ENCODE measurements at regions of chr17 and their contacts with region 1.

Region 1: DNA sequence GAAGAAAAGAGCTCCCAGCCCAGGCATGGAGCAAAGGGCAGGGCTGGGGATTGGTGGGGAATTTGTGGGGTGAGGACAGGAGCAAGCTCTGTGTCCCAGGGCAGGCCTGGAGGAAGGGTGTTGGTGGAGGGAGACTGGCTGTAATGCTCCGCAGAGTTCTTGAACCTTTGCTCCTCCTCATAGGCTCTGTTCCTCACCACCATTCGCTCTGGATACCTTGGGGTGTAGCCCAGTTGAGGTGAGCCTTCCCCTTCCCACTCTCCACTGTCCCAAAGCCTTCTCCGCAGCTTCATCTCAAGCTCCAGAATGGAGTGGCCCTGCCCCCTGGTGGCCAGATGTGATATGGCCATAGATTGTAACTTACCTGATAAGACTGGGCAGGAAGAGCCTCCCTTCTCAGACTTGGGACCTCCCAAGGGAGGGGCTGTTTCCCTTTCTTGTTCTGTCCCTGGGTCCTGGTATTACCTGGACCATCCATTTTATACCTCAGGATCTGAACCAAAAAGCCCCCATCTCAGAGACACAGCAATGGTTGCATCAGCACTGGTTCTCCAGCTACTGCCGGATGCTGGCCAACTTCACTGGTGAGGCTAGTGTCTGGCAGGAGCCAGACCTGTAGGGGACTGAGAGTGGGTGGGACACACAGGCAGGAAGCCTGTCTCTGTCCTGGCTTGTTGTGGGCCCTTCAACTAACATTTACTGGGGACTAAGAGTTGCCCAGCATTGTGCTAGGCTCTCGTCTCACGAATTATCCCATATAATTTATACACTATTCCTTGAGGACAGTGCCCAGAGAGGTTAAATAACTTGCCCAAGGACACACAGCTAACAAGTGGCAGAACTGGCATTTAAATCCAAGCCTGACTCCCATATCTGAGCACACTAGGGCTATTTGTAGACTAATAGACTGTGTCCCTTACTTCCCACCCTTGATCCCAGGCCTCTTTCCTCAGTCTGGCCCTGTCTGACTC is 19.1 kb upstream of the STAC2 start:
- DNase-seq: peak; percentile 40
- ATAC-seq: peak; percentile 96
- H3K4me3 ChIP-seq: no peak overlapping the region
- H3K27ac ChIP-seq: no peak overlapping the region
- H3K4me1 ChIP-seq: peaks cover 9% of the 10 kb centered on the region
- H3K27me3 ChIP-seq: no peaks in the 10 kb centered on the region; a peak in 2 of 4 replicates
- CTCF ChIP-seq: peak; percentile 90 to 97 (median 94); a peak in 5 of 6 replicates
- EP300 ChIP-seq: no peak
- POLR2A ChIP-seq: no peak
- RAD21 ChIP-seq: peak; percentile 90

Region 2: GRCh38 chr17:39174907-39175694 is 69.8 kb before region 1 on chr17:
- CTCF ChIA-PET with region 1: interaction called, 20 read pairs
- POLR2A ChIA-PET with region 1: no interaction called
- RAD21 ChIA-PET with region 1: interaction called, 5 read pairs
- SMC1A ChIA-PET with region 1: interaction called, 4 read pairs
- in situ Hi-C with region 1: no loop called
- intact Hi-C with region 1: no loop called
- DNase-seq: no peak
- ATAC-seq: peak; percentile 93
- H3K4me3 ChIP-seq: no peak overlapping the region
- H3K27ac ChIP-seq: no peak overlapping the region
- H3K4me1 ChIP-seq: no peaks in the 10 kb centered on the region
- H3K27me3 ChIP-seq: no peaks in the 10 kb centered on the region
- CTCF ChIP-seq: peak; percentile 69 to 83 (median 81)
- EP300 ChIP-seq: no peak
- POLR2A ChIP-seq: no peak
- RAD21 ChIP-seq: peak; percentile 49

Region 3: GRCh38 chr17:39199820-39200069 is 45.1 kb before region 1 on chr17:
- CTCF ChIA-PET with region 1: interaction called, 658 read pairs
- POLR2A ChIA-PET with region 1: interaction called, 8 read pairs
- RAD21 ChIA-PET with region 1: interaction called, 160 read pairs
- SMC1A ChIA-PET with region 1: interaction called, 8 read pairs
- in situ Hi-C with region 1: no loop called
- intact Hi-C with region 1: no loop called
- DNase-seq: peak; percentile 81
- ATAC-seq: peak; percentile 65
- H3K4me3 ChIP-seq: peak overlapping the region; percentile 95
- H3K27ac ChIP-seq: peak overlapping the region; percentile 100
- H3K4me1 ChIP-seq: peaks cover 27% of the 10 kb centered on the region
- H3K27me3 ChIP-seq: no peaks in the 10 kb centered on the region
- CTCF ChIP-seq: no peak
- EP300 ChIP-seq: no peak
- POLR2A ChIP-seq: no peak
- RAD21 ChIP-seq: no peak

Region 4: DNA sequence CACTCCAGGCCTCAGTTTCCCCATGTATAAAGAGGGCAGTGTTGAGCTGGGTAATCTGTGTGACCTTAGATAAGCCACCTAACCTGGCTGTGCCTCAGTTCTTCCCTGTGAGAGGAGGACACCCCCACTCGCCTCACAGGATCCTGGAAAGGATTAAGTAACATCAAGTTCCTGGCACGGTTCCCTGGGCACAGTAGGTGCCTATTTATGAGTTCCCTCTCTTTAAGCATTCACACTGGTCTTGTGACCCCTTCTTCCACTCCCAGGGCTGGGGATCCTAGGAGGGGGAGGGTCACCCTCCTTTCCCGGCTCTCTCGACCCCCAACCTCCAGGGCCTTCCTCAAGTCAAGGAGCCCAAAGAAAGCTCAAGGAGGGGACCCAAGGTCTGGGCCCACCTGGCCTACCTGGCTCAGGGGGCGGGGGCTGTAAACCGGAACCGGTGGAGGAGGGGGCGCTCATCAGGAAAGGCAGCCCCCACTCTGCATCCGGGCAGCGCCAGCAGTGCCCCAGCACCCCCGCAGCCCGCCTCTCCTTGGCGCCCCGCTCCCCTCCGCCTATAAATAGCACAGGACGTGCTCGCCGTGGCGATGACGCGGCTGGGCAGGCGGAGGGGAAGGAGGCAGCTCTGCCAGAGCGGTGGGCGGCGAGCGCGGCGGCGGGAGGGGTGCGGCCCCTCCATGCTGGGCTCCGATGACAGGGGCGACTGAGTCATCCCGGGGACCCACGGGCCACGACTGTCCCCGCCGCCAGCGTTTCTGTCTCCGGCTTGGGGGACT is 35.4 kb before region 1 on chr17:
- CTCF ChIA-PET with region 1: interaction called, 658 read pairs
- POLR2A ChIA-PET with region 1: interaction called, 10 read pairs
- RAD21 ChIA-PET with region 1: interaction called, 160 read pairs
- SMC1A ChIA-PET with region 1: interaction called, 76 read pairs
- in situ Hi-C with region 1: loop called (anchors 5 kb)
- intact Hi-C with region 1: loop called (anchors 1 kb)
- DNase-seq: no peak
- ATAC-seq: peak; percentile 12
- H3K4me3 ChIP-seq: peak overlapping the region; percentile 34; the same call in 1 of the 2 replicates
- H3K27ac ChIP-seq: no peak overlapping the region; the same call in 1 of the 2 replicates
- H3K4me1 ChIP-seq: peaks cover 27% of the 10 kb centered on the region
- H3K27me3 ChIP-seq: peaks cover 2 to 3% of the 10 kb centered on the region in 2 experiments; a peak in 1 of 4 replicates
- CTCF ChIP-seq: no peak
- EP300 ChIP-seq: no peak
- POLR2A ChIP-seq: peak; percentile 41; the same call in 1 of the 2 replicates
- RAD21 ChIP-seq: no peak

Region 5: DNA sequence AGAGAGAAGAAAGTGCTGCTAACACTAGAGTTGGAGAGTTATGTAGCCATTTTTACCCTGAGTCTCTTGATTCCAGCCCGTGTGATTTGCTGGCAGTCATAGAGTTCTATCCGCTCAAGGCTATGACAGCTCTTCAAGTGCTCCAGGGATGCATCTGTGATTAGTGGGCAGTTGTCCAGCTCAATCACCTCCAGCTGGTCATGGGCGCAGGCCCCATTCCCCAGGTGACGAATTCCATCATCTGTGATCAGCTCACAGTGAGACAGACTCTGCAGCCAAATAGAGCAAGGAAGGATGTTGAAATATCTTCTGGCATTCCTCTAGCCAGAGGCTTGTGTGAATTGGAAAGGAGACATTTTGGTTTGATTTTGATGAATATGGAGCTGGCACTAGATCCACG is 19.2 kb after region 1 on chr17:
- CTCF ChIA-PET with region 1: interaction called, 17 read pairs
- POLR2A ChIA-PET with region 1: no interaction called
- RAD21 ChIA-PET with region 1: interaction called, 4 read pairs
- SMC1A ChIA-PET with region 1: interaction called, 3 read pairs
- in situ Hi-C with region 1: no loop called
- intact Hi-C with region 1: no loop called
- DNase-seq: no peak
- ATAC-seq: no peak
- H3K4me3 ChIP-seq: no peak overlapping the region
- H3K27ac ChIP-seq: no peak overlapping the region
- H3K4me1 ChIP-seq: no peaks in the 10 kb centered on the region
- H3K27me3 ChIP-seq: no peaks in the 10 kb centered on the region
- CTCF ChIP-seq: no peak
- EP300 ChIP-seq: no peak
- POLR2A ChIP-seq: no peak
- RAD21 ChIP-seq: no peak

Region 6: DNA sequence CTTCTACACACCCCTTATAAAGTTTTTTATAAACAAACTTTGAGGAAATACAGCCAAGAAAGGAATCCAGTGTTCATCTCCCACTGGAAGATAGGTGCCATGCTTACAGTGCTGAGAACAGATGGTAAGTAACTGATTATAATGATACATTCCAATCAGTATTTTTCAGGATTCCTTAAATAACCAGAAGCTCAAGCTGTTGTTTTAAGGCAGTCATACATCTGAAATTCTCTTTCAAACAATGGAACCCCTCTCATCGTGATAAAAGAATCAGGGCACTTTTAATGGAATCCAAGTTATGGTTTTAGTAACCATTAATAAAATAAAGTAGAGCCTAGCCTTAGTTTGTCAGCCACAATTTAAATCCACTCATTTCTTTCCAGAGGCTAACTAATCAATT is 36.9 kb after region 1 on chr17:
- CTCF ChIA-PET with region 1: interaction called, 14 read pairs
- POLR2A ChIA-PET with region 1: no interaction called
- RAD21 ChIA-PET with region 1: no interaction called
- SMC1A ChIA-PET with region 1: interaction called, 4 read pairs
- in situ Hi-C with region 1: no loop called
- intact Hi-C with region 1: no loop called
- DNase-seq: no peak
- ATAC-seq: no peak
- H3K4me3 ChIP-seq: no peak overlapping the region
- H3K27ac ChIP-seq: no peak overlapping the region
- H3K4me1 ChIP-seq: no peaks in the 10 kb centered on the region
- H3K27me3 ChIP-seq: no peaks in the 10 kb centered on the region
- CTCF ChIP-seq: no peak
- EP300 ChIP-seq: no peak
- POLR2A ChIP-seq: no peak
- RAD21 ChIP-seq: no peak

Region 7: GRCh38 chr17:40577611-40578065 is 1332.8 kb after region 1 on chr17:
- CTCF ChIA-PET with region 1: no interaction called
- POLR2A ChIA-PET with region 1: no interaction called
- RAD21 ChIA-PET with region 1: no interaction called
- SMC1A ChIA-PET with region 1: no interaction called
- in situ Hi-C with region 1: no loop called
- intact Hi-C with region 1: no loop called
- DNase-seq: peak; percentile 85
- ATAC-seq: peak; percentile 85
- H3K4me3 ChIP-seq: no peak overlapping the region
- H3K27ac ChIP-seq: no peak overlapping the region
- H3K4me1 ChIP-seq: peaks cover 30% of the 10 kb centered on the region
- H3K27me3 ChIP-seq: no peaks in the 10 kb centered on the region
- CTCF ChIP-seq: no peak; a peak in 1 of 6 replicates
- EP300 ChIP-seq: peak; percentile 90 to 97; a peak in 3 of 4 replicates
- POLR2A ChIP-seq: no peak
- RAD21 ChIP-seq: peak; percentile 26; the same call in 1 of the 2 replicates